ENCODE measurements at regions of chr1 and their contacts with region 1.

Region 1: GRCh38 chr1:205485338-205486228 is 18.9 kb upstream of the CDK18 start:
- DNase-seq: peak; percentile 76
- H3K4me3 Mint-ChIP-seq: no peak overlapping the region
- H3K27ac Mint-ChIP-seq: no peak overlapping the region
- H3K4me1 Mint-ChIP-seq: peaks cover 9% of the 10 kb centered on the region
- H3K27me3 Mint-ChIP-seq: peaks cover 87% of the 10 kb centered on the region

Region 2: GRCh38 chr1:205229399-205229871 is 256.1 kb before region 1 on chr1:
- CTCF ChIA-PET with region 1: no interaction called
- DNase-seq: peak; percentile 80
- H3K4me3 Mint-ChIP-seq: peak overlapping the region; percentile 82
- H3K27ac Mint-ChIP-seq: no peak overlapping the region
- H3K4me1 Mint-ChIP-seq: peaks cover 40% of the 10 kb centered on the region
- H3K27me3 Mint-ChIP-seq: peaks cover 41% of the 10 kb centered on the region

Region 3: GRCh38 chr1:205321164-205321958 is 164.2 kb before region 1 on chr1 and contains the start of gene NUAK2:
- CTCF ChIA-PET with region 1: interaction called, 12 read pairs
- DNase-seq: peak; percentile 88
- H3K4me3 Mint-ChIP-seq: peak within 1 kb of the TSS; percentile 90
- H3K27ac Mint-ChIP-seq: peak within 1 kb of the TSS; percentile 87
- H3K4me1 Mint-ChIP-seq: peaks cover 65% of the 10 kb centered on the region
- H3K27me3 Mint-ChIP-seq: peaks cover 27% of the 10 kb centered on the region

Region 4: GRCh38 chr1:205354259-205354904 is 131.2 kb before region 1 on chr1:
- CTCF ChIA-PET with region 1: interaction called, 111 read pairs
- DNase-seq: peak; percentile 77
- H3K4me3 Mint-ChIP-seq: no peak overlapping the region
- H3K27ac Mint-ChIP-seq: no peak overlapping the region
- H3K4me1 Mint-ChIP-seq: no peaks in the 10 kb centered on the region
- H3K27me3 Mint-ChIP-seq: peaks cover 54% of the 10 kb centered on the region

Region 5: GRCh38 chr1:205416322-205416721 is 69.3 kb before region 1 on chr1:
- CTCF ChIA-PET with region 1: interaction called, 12 read pairs
- DNase-seq: no peak
- H3K4me3 Mint-ChIP-seq: no peak overlapping the region
- H3K27ac Mint-ChIP-seq: no peak overlapping the region
- H3K4me1 Mint-ChIP-seq: no peaks in the 10 kb centered on the region
- H3K27me3 Mint-ChIP-seq: peaks cover 40% of the 10 kb centered on the region

Region 6: DNA sequence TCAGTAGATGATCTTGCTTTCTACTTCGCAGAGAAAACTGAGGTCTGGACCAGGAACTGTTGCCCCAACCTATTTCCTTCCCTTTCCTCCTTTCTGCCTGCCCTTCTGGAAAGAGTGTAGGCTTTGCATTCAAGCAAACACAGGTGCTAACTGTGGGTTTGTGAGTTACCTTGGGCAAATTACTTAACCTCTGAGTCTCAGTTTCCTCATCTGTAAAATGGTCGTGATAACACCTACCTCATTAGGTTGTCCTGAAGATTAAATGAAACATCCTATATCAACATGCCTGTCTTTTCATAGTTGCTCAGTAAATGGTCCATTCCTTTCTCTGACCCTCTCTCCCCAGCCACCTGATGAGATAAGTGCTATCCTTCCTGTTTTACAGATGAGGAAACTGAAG is 20.2 kb before region 1 on chr1:
- CTCF ChIA-PET with region 1: interaction called, 13 read pairs
- DNase-seq: no peak
- H3K4me3 Mint-ChIP-seq: no peak overlapping the region
- H3K27ac Mint-ChIP-seq: no peak overlapping the region
- H3K4me1 Mint-ChIP-seq: no peaks in the 10 kb centered on the region
- H3K27me3 Mint-ChIP-seq: peaks cover 48% of the 10 kb centered on the region

Region 7: GRCh38 chr1:205500240-205501233 is 15.0 kb after region 1 on chr1:
- CTCF ChIA-PET with region 1: interaction called, 16 read pairs
- DNase-seq: no peak
- H3K4me3 Mint-ChIP-seq: no peak overlapping the region
- H3K27ac Mint-ChIP-seq: no peak overlapping the region
- H3K4me1 Mint-ChIP-seq: peaks cover 12% of the 10 kb centered on the region
- H3K27me3 Mint-ChIP-seq: peaks cover 39% of the 10 kb centered on the region

Measured in activated naive CD4-positive, alpha-beta T cell treated with anti-CD3 and anti-CD28 coated beads, Interleukin-2, amount 10 ng/mL, durations not matched to agents 7 days and 5 days (primary cell).